ENCODE measurements at regions of chr12 and their contacts with region 1.

Region 1: GRCh38 chr12:106696681-106697417 is 77.6 kb upstream of the RIC8B start:
- DNase-seq: no peak
- H3K4me3 ChIP-seq: no peak overlapping the region
- H3K27ac ChIP-seq: no peak overlapping the region
- H3K4me1 ChIP-seq: no peaks in the 10 kb centered on the region
- H3K27me3 ChIP-seq: peaks cover 23% of the 10 kb centered on the region; the same call in 1 of the 2 replicates
- CTCF ChIP-seq: no peak

Region 2: DNA sequence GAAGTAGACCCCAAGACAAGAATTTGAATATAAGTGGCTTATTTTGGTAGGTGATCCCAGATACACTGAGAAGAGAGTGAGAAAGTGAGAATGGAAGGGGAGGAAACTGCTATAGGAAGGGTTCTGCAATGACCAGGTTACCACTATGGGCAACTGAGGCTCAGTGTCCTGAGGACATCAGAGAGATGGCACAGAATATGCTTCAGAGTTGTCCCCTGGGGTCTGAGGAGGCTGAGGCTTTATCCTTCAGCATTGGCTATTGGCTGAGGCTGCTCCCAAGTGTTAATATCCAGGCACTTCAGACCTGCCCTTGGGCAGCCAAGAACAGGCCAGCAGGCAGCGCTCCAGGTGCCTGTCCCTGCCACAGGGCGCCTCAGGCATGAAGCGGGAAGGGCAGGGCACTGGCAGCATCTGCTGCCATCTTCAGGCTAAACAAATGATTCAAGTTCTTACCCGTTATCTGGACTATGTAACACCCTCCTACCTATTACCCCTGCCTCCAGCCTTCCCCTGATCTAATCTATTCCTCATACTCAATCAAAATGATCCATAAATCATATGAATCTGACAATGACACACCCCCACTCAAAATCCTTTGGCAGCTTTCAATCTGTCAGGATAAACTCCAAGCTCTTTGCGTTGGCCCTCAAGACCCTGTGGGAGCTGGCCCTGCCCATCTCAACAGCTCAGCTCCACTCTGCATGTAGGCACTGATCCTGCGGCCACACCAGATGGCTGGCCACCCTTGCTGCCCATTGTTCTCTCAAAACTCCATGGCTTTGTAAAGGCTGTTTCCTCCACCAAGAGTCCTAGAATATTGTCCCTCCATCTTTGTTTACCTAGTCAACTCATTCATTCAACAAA is 491.4 kb before region 1 on chr12:
- CTCF ChIA-PET with region 1: no interaction called
- POLR2A ChIA-PET with region 1: no interaction called
- intact Hi-C with region 1: no loop called
- DNase-seq: peak; percentile 46 to 47
- H3K4me3 ChIP-seq: no peak overlapping the region
- H3K27ac ChIP-seq: no peak overlapping the region
- H3K4me1 ChIP-seq: no peaks in the 10 kb centered on the region
- H3K27me3 ChIP-seq: peaks cover 22% of the 10 kb centered on the region
- CTCF ChIP-seq: peak; percentile 50

Region 3: GRCh38 chr12:106645465-106646330 is 51.2 kb before region 1 on chr12:
- CTCF ChIA-PET with region 1: interaction called, 11 read pairs
- POLR2A ChIA-PET with region 1: no interaction called
- intact Hi-C with region 1: no loop called
- DNase-seq: no peak
- H3K4me3 ChIP-seq: no peak overlapping the region
- H3K27ac ChIP-seq: no peak overlapping the region
- H3K4me1 ChIP-seq: no peaks in the 10 kb centered on the region
- H3K27me3 ChIP-seq: no peaks in the 10 kb centered on the region
- CTCF ChIP-seq: no peak

Region 4: DNA sequence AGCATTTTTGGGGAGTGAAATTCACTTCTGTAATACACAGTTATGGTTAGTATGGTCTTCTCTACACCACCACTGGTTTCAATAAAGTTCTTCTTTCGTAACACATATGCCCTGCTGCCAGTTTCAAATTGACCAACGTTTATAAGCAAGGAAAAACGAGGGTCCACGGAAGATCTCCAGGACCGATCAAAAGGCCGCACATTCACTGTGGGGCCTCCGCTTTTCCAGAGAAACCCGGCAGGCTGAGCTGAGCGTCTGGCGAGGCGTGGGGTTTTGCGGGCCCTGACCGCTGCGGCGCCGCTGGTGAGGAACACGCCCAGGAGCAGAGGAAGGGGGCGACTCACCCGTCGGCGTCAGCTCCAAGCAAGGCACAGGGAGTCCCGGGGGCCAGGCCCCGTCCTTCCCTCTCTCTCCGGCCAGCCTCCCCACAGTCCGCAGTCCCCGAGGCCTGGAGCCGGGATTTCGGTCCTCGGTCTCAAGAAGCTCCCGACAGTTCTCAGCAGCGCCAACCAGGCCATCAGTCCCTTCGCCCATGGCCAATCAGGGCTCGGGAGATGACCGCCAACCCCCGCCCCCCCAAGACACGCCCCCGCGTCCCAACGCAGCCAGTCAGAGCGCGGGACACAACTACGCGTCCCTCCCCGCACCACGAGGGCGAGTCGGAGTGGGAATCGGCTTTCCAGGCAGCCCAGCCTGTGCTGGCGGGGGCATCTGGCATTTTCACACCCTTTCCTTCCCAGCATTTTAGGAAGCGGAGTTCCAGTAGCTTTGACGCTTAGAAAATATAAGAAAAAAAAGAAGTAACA is 290.0 kb after region 1 on chr12 and contains the start of gene MTERF2:
- CTCF ChIA-PET with region 1: no interaction called
- POLR2A ChIA-PET with region 1: no interaction called
- intact Hi-C with region 1: no loop called
- DNase-seq: peak; percentile 86 to 89
- H3K4me3 ChIP-seq: peak within 1 kb of the TSS; percentile 74
- H3K27ac ChIP-seq: no peak within 1 kb of the TSS
- H3K4me1 ChIP-seq: peaks cover 12% of the 10 kb centered on the region
- H3K27me3 ChIP-seq: no peaks in the 10 kb centered on the region
- CTCF ChIP-seq: no peak
- total RNA-seq, gene MTERF2: 8.2 and 9.0 TPM in 2 replicates